HepG2 (cell line): ENCODE measurements at regions of chr20 and their contacts with region 1.

Region 1: GRCh38 chr20:42549496-42549895 is 640.2 kb downstream of the PTPRT start:
- DNase-seq: no peak
- ATAC-seq: no peak
- H3K4me3 ChIP-seq: no peak overlapping the region
- H3K27ac ChIP-seq: no peak overlapping the region
- H3K4me1 ChIP-seq: no peaks in the 10 kb centered on the region
- H3K27me3 ChIP-seq: no peaks in the 10 kb centered on the region
- CTCF ChIP-seq: no peak
- EP300 ChIP-seq: no peak
- POLR2A ChIP-seq: no peak
- RAD21 ChIP-seq: no peak

Region 2: DNA sequence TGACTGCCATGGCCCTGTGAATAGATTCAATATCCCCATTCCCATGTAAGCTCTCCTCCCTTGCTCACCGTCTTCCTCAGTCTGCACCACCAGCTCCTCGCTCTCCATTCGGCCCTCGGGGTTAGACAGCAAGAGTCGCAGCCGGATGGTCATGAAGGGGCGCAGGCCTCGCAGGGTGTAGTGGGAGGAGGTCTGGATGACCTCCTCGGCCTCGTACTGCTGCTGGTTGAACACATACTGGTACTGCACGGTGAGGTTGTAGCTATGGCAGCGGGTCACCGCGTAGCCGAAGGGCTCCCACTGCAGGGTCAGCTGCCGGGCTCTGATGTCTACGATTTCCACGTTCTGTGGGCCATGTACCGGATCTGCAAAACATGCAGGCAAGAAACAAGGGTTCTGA is 77.3 kb before region 1 on chr20:
- CTCF ChIA-PET with region 1: no interaction called
- POLR2A ChIA-PET with region 1: no interaction called
- in situ Hi-C with region 1: no loop called
- intact Hi-C with region 1: no loop called
- DNase-seq: no peak
- ATAC-seq: no peak
- H3K4me3 ChIP-seq: no peak overlapping the region
- H3K27ac ChIP-seq: no peak overlapping the region
- H3K4me1 ChIP-seq: no peaks in the 10 kb centered on the region
- H3K27me3 ChIP-seq: no peaks in the 10 kb centered on the region; a peak in 1 of 5 replicates
- CTCF ChIP-seq: no peak
- EP300 ChIP-seq: no peak
- POLR2A ChIP-seq: no peak
- RAD21 ChIP-seq: no peak

Region 3: DNA sequence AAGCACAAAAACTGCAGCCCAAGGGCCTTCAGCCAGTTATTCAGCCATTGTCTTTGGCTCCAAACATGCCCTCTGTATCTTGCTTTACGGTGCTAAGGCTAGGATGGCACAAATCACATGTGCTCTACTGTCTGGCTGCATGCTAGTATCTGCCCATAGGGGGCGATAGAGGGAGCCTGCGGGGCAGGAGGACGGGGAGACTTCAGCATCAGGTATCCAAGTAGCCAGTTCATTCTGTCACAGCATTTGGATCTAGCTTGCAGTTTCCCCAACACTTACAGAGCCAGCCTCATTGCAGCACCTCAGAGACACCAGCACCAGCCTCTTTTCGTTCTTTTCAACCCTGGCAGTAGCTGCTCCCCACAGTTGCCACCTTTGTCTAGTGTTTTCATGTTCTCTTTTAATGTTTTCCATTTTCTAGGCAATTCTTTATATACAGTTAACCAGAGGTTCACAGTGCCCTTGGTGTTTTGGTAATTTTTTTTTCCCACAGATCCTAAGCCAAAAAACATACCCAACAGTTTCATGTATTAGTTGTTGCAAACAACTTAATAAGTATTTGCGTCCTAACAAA is 65.7 kb before region 1 on chr20:
- CTCF ChIA-PET with region 1: no interaction called
- POLR2A ChIA-PET with region 1: no interaction called
- in situ Hi-C with region 1: no loop called
- intact Hi-C with region 1: no loop called
- DNase-seq: peak; percentile 32
- ATAC-seq: peak; percentile 83
- H3K4me3 ChIP-seq: no peak overlapping the region
- H3K27ac ChIP-seq: no peak overlapping the region
- H3K4me1 ChIP-seq: no peaks in the 10 kb centered on the region
- H3K27me3 ChIP-seq: no peaks in the 10 kb centered on the region
- CTCF ChIP-seq: peak; percentile 58
- EP300 ChIP-seq: no peak
- POLR2A ChIP-seq: no peak
- RAD21 ChIP-seq: no peak

Region 4: GRCh38 chr20:42502591-42502990 is 46.9 kb before region 1 on chr20:
- CTCF ChIA-PET with region 1: no interaction called
- POLR2A ChIA-PET with region 1: no interaction called
- in situ Hi-C with region 1: no loop called
- intact Hi-C with region 1: loop called (anchors 1 kb)
- DNase-seq: no peak
- ATAC-seq: no peak
- H3K4me3 ChIP-seq: no peak overlapping the region
- H3K27ac ChIP-seq: no peak overlapping the region
- H3K4me1 ChIP-seq: no peaks in the 10 kb centered on the region
- H3K27me3 ChIP-seq: no peaks in the 10 kb centered on the region
- CTCF ChIP-seq: no peak
- EP300 ChIP-seq: no peak
- POLR2A ChIP-seq: no peak
- RAD21 ChIP-seq: no peak

Region 5: GRCh38 chr20:42576191-42576590 is 26.7 kb after region 1 on chr20:
- CTCF ChIA-PET with region 1: no interaction called
- POLR2A ChIA-PET with region 1: no interaction called
- in situ Hi-C with region 1: no loop called
- intact Hi-C with region 1: no loop called
- DNase-seq: no peak
- ATAC-seq: no peak
- H3K4me3 ChIP-seq: no peak overlapping the region
- H3K27ac ChIP-seq: no peak overlapping the region
- H3K4me1 ChIP-seq: no peaks in the 10 kb centered on the region
- H3K27me3 ChIP-seq: no peaks in the 10 kb centered on the region
- CTCF ChIP-seq: no peak
- EP300 ChIP-seq: no peak
- POLR2A ChIP-seq: no peak
- RAD21 ChIP-seq: no peak